ENCODE measurements at regions of chr1 and their contacts with region 1.

Region 1: DNA sequence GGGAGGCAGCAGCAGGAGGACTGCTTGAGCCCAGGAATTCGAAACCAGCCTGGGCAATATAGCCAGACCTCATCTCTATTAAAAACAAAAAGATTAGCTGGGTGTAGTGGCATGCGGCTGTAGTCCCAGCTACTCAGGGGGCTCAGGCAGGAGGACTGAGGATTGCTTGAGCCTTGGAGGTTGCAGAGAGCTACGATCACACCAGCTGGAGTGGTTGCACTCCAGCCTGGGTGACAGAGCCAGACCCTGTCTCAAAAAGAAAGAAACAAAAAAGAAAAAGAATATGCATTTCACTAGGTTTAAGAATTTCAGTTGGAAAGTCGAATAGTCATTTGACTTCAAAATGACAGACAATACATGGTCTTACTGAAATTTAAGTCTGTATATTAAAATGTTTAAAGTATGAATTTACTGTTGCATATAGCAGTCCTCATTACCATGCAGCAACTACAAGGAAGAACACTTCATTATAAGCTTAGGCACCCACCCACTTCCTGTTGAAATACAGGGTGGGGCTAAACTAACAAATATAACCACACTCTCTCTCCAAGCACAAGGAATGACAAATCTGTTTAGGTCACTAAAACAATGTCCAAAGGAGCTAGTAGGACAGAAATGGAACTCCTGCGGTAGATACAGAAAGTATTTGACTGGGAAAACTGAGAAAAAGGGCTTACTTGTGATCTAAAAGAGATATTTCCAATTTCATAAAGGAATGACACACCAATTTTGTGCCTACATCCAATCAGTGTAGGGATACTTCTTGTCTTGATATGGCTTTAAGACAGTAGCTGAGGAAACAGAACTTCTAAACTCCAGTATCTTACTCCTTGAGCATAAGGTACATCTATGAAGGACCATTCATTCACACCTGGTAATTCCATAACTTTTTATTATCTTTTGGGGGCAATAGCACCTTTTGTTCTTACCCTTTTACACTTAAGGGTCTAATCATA is 44.1 kb downstream of the GPR3 start:
- DNase-seq: peak; percentile 50
- ATAC-seq: peak; percentile 55
- H3K4me3 ChIP-seq: peak overlapping the region; percentile 9 to 68 (median 34)
- H3K4me3 Mint-ChIP-seq: peak overlapping the region; percentile 84
- H3K27ac ChIP-seq: peak overlapping the region; percentile 71 to 83
- H3K27ac Mint-ChIP-seq: peak overlapping the region; percentile 86
- H3K4me1 ChIP-seq: peaks cover 76 to 78% of the 10 kb centered on the region in 2 donors
- H3K4me1 Mint-ChIP-seq: peaks cover 78% of the 10 kb centered on the region
- H3K27me3 ChIP-seq: no peaks in the 10 kb centered on the region
- H3K27me3 Mint-ChIP-seq: no peaks in the 10 kb centered on the region
- CTCF ChIP-seq: no peak

Region 2: GRCh38 chr1:27402349-27402754 is 34.1 kb before region 1 on chr1:
- CTCF ChIA-PET with region 1: interaction called, 9 read pairs
- POLR2A ChIA-PET with region 1: no interaction called
- intact Hi-C with region 1: loop called (anchors 2 kb)
- DNase-seq: peak; percentile 54
- ATAC-seq: no peak
- H3K4me3 ChIP-seq: no peak overlapping the region
- H3K4me3 Mint-ChIP-seq: peak overlapping the region; percentile 72
- H3K27ac ChIP-seq: peak overlapping the region; percentile 49 to 79
- H3K27ac Mint-ChIP-seq: peak overlapping the region; percentile 89
- H3K4me1 ChIP-seq: peaks cover 41 to 59% of the 10 kb centered on the region in 2 donors
- H3K4me1 Mint-ChIP-seq: peaks cover 58% of the 10 kb centered on the region
- H3K27me3 ChIP-seq: no peaks in the 10 kb centered on the region
- H3K27me3 Mint-ChIP-seq: no peaks in the 10 kb centered on the region
- CTCF ChIP-seq: no peak

Region 3: GRCh38 chr1:27455139-27455811 is 18.8 kb after region 1 on chr1:
- CTCF ChIA-PET with region 1: interaction called, 3 read pairs
- POLR2A ChIA-PET with region 1: interaction called, 6 read pairs
- intact Hi-C with region 1: loop called (anchors 2 kb)
- DNase-seq: no peak
- ATAC-seq: no peak
- H3K4me3 ChIP-seq: no peak overlapping the region
- H3K4me3 Mint-ChIP-seq: no peak overlapping the region
- H3K27ac ChIP-seq: peak overlapping the region in 1 of 2 donors; percentile 61
- H3K27ac Mint-ChIP-seq: peak overlapping the region; percentile 21
- H3K4me1 ChIP-seq: peaks cover 23 to 26% of the 10 kb centered on the region in 2 donors
- H3K4me1 Mint-ChIP-seq: peaks cover 39% of the 10 kb centered on the region
- H3K27me3 ChIP-seq: no peaks in the 10 kb centered on the region
- H3K27me3 Mint-ChIP-seq: no peaks in the 10 kb centered on the region
- CTCF ChIP-seq: no peak

Region 4: DNA sequence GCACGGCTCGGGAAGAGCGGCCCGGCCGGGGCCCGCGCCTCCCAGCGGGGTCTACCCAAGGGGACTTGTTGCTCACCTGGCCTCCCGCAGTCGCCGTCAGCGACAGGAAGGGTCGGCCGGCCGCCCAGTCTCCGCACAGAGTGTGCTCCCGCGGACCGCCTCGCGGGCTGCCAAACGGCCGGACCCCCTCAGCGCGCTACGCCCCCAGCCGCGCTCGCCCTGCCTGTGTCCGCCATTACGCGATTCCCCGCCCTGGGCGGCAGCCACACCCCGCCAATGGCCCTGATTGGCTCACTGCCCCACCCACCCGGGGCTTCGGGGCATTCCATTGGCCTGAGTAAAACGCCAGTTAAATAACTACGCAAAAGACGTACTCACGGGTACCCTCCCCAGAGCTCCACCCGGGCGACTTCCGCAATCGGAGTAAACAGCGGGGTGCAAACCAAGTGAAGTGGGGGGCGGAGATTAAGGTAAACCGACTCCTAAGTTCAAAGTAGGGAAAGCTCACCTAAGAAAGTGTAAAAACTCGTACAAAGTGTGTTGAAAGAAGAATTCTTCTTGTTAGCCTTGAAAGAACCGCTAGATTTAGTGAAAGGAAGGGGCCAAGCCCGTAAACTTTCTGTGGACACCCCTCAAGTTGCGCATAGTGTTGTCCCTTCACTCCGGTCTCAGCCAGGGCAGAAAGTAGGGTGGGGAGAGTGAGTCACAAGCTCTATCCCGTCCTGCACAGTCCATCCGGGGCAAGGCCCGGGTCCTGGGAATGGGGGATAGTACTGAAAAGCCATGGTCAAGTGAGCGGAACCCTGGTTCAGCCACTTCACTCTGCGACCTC is 53.6 kb after region 1 on chr1 and contains the start of gene WASF2:
- CTCF ChIA-PET with region 1: interaction called, 6 read pairs
- POLR2A ChIA-PET with region 1: interaction called, 7 read pairs
- intact Hi-C with region 1: loop called (anchors 2 kb)
- DNase-seq: peak; percentile 98
- ATAC-seq: peak; percentile 90
- H3K4me3 ChIP-seq: peak within 1 kb of the TSS; percentile 78 to 100 (median 99)
- H3K4me3 Mint-ChIP-seq: peak within 1 kb of the TSS; percentile 99
- H3K27ac ChIP-seq: peak within 1 kb of the TSS; percentile 89 to 95
- H3K27ac Mint-ChIP-seq: peak within 1 kb of the TSS; percentile 99
- H3K4me1 ChIP-seq: peaks cover 44 to 58% of the 10 kb centered on the region in 2 donors
- H3K4me1 Mint-ChIP-seq: peaks cover 57% of the 10 kb centered on the region
- H3K27me3 ChIP-seq: no peaks in the 10 kb centered on the region
- H3K27me3 Mint-ChIP-seq: no peaks in the 10 kb centered on the region
- CTCF ChIP-seq: no peak
- total RNA-seq, gene WASF2: 166 and 169 TPM in 2 replicates

Region 5: GRCh38 chr1:27507960-27508665 is 71.6 kb after region 1 on chr1:
- CTCF ChIA-PET with region 1: no interaction called
- POLR2A ChIA-PET with region 1: no interaction called
- intact Hi-C with region 1: no loop called
- DNase-seq: no peak
- ATAC-seq: no peak
- H3K4me3 ChIP-seq: no peak overlapping the region
- H3K4me3 Mint-ChIP-seq: no peak overlapping the region
- H3K27ac ChIP-seq: no peak overlapping the region
- H3K27ac Mint-ChIP-seq: peak overlapping the region; percentile 68
- H3K4me1 ChIP-seq: no peaks in the 10 kb centered on the region
- H3K4me1 Mint-ChIP-seq: peaks cover 3% of the 10 kb centered on the region
- H3K27me3 ChIP-seq: no peaks in the 10 kb centered on the region
- H3K27me3 Mint-ChIP-seq: no peaks in the 10 kb centered on the region
- CTCF ChIP-seq: no peak

Region 6: GRCh38 chr1:27568300-27569087 is 132.0 kb after region 1 on chr1:
- CTCF ChIA-PET with region 1: no interaction called
- POLR2A ChIA-PET with region 1: interaction called, 3 read pairs
- intact Hi-C with region 1: loop called (anchors 1 kb)
- DNase-seq: peak; percentile 95
- ATAC-seq: peak; percentile 92
- H3K4me3 ChIP-seq: peak overlapping the region in 4 of 5 experiments; percentile 25 to 69 (median 50)
- H3K4me3 Mint-ChIP-seq: peak overlapping the region; percentile 86
- H3K27ac ChIP-seq: peak overlapping the region; percentile 27 to 68
- H3K27ac Mint-ChIP-seq: peak overlapping the region; percentile 69
- H3K4me1 ChIP-seq: peaks cover 15 to 38% of the 10 kb centered on the region in 2 donors
- H3K4me1 Mint-ChIP-seq: peaks cover 40% of the 10 kb centered on the region
- H3K27me3 ChIP-seq: no peaks in the 10 kb centered on the region
- H3K27me3 Mint-ChIP-seq: no peaks in the 10 kb centered on the region
- CTCF ChIP-seq: peak; percentile 82

Region 7: GRCh38 chr1:27979151-27979858 is 542.8 kb after region 1 on chr1:
- CTCF ChIA-PET with region 1: no interaction called
- POLR2A ChIA-PET with region 1: no interaction called
- intact Hi-C with region 1: no loop called
- DNase-seq: peak; percentile 72
- ATAC-seq: peak; percentile 51
- H3K4me3 ChIP-seq: no peak overlapping the region
- H3K4me3 Mint-ChIP-seq: no peak overlapping the region
- H3K27ac ChIP-seq: no peak overlapping the region
- H3K27ac Mint-ChIP-seq: peak overlapping the region; percentile 2
- H3K4me1 ChIP-seq: peaks cover 0 to 7% of the 10 kb centered on the region in 2 donors
- H3K4me1 Mint-ChIP-seq: peaks cover 4% of the 10 kb centered on the region
- H3K27me3 ChIP-seq: no peaks in the 10 kb centered on the region
- H3K27me3 Mint-ChIP-seq: no peaks in the 10 kb centered on the region
- CTCF ChIP-seq: peak; percentile 81

Region 8: GRCh38 chr1:28056129-28056925 is 619.8 kb after region 1 on chr1:
- CTCF ChIA-PET with region 1: no interaction called
- POLR2A ChIA-PET with region 1: no interaction called
- intact Hi-C with region 1: no loop called
- DNase-seq: peak; percentile 69
- ATAC-seq: peak; percentile 85
- H3K4me3 ChIP-seq: no peak overlapping the region
- H3K4me3 Mint-ChIP-seq: peak overlapping the region; percentile 52
- H3K27ac ChIP-seq: peak overlapping the region; percentile 52 to 72
- H3K27ac Mint-ChIP-seq: peak overlapping the region; percentile 80
- H3K4me1 ChIP-seq: peaks cover 12 to 16% of the 10 kb centered on the region in 2 donors
- H3K4me1 Mint-ChIP-seq: peaks cover 29% of the 10 kb centered on the region
- H3K27me3 ChIP-seq: no peaks in the 10 kb centered on the region
- H3K27me3 Mint-ChIP-seq: no peaks in the 10 kb centered on the region
- CTCF ChIP-seq: no peak